Mammary epithelial cell (primary cell): ENCODE measurements at regions of chr12 and their contacts with region 1.

Region 1: DNA sequence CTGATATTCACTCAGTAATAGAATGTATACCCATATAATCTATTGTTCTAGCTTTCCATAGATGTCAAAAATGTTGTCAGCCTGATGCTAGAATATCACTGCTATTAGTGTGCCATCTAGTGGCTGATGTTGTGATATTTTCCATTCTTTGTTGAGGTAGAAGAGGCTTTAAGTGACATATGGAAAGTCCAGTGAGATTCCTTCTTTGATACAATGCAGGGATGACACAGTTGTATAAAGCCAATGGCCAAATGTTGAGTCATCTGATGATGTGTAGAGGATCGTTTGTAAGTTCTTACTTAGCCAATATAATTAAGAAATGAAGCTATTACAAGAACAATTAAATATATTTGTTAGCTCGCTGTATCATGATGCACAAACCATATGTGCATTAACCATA is 58.1 kb upstream of the PCED1B start:
- DNase-seq: peak; percentile 93
- H3K4me3 ChIP-seq: no peak overlapping the region
- H3K27ac ChIP-seq: peak overlapping the region; percentile 61
- H3K4me1 ChIP-seq: peaks cover 51% of the 10 kb centered on the region
- H3K27me3 ChIP-seq: no peaks in the 10 kb centered on the region
- CTCF ChIP-seq: peak; percentile 56 to 67

Region 2: GRCh38 chr12:45990468-45991283 is 1030.6 kb before region 1 on chr12 and contains the start of gene SCAF11:
- CTCF ChIA-PET with region 1: no interaction called
- dilution Hi-C with region 1: no loop called
- in situ Hi-C with region 1: no loop called
- intact Hi-C with region 1: loop called (anchors 1 kb)
- DNase-seq: peak; percentile 100
- H3K4me3 ChIP-seq: peak within 1 kb of the TSS; percentile 53 to 96 (median 67)
- H3K27ac ChIP-seq: peak within 1 kb of the TSS; percentile 83
- H3K4me1 ChIP-seq: peaks cover 23% of the 10 kb centered on the region
- H3K27me3 ChIP-seq: no peaks in the 10 kb centered on the region
- CTCF ChIP-seq: peak; percentile 92 to 95
- total RNA-seq, gene SCAF11: 99.2 to 100 TPM

Region 3: DNA sequence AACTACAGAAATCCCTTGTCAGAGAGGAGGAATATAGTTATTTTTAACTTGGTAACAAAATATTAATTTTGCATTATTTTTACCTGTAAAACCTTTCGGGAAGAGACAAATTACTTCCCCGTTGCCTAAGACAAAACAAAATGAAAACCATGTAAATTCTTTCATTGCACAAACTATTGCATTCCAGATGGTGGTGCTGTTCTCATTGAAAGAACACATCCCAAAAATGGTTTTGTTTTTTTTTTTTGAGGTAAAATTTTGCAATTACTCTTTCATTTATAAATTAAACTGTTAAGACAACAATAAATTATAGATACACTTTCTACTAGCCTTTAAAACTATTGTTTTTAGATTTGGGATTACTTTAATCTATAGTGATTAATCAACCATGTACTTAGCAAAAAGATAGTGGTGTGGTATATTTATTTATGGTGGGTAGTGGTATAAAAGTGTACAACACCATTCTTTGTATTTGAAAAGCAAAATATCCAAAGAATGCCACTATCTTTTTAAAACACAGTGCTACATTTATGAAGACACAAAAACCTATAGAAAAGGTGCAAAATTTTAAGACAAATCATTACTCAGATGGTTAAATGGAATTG is 867.9 kb before region 1 on chr12:
- CTCF ChIA-PET with region 1: no interaction called
- dilution Hi-C with region 1: no loop called
- in situ Hi-C with region 1: loop called in 1 of 2 experiments (anchors 25 kb)
- intact Hi-C with region 1: no loop called
- DNase-seq: no peak
- H3K4me3 ChIP-seq: peak overlapping the region in 1 of 3 experiments; percentile 17
- H3K27ac ChIP-seq: no peak overlapping the region
- H3K4me1 ChIP-seq: peaks cover 11% of the 10 kb centered on the region
- H3K27me3 ChIP-seq: no peaks in the 10 kb centered on the region
- CTCF ChIP-seq: peak; percentile 67 to 77

Region 4: DNA sequence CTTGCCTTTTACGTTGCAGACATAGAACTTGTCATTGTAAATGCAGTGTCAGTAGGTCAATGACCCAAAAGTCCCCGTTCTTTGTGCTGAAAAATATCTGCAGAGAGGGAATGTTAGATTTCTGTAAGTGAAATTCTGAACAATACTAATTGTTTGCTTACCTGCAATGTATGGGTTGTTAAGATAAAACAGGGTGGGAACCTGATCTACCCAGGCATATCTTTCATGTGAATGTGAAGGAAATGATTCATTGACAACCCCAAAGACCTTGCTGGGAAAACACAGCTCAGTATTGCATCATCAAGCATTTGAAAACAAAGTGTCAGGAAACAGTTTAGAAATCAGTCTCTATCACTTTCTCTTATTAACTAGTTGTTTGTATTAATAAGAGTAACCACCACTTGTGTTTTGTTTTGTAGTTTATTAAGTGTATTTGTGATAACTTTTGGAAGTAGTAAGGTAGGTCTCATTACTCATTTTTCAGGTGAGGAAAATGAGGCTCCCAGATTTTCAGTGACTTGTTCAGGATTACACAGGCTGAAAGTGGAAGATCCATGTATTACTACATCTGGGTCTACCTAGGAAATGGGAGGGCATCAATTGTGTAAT is 590.9 kb before region 1 on chr12:
- CTCF ChIA-PET with region 1: no interaction called
- dilution Hi-C with region 1: no loop called
- in situ Hi-C with region 1: no loop called
- intact Hi-C with region 1: loop called (anchors 2 kb)
- DNase-seq: peak; percentile 92
- H3K4me3 ChIP-seq: peak overlapping the region in 1 of 3 experiments; percentile 23
- H3K27ac ChIP-seq: peak overlapping the region; percentile 100
- H3K4me1 ChIP-seq: peaks cover 35% of the 10 kb centered on the region
- H3K27me3 ChIP-seq: no peaks in the 10 kb centered on the region
- CTCF ChIP-seq: no peak

Region 5: DNA sequence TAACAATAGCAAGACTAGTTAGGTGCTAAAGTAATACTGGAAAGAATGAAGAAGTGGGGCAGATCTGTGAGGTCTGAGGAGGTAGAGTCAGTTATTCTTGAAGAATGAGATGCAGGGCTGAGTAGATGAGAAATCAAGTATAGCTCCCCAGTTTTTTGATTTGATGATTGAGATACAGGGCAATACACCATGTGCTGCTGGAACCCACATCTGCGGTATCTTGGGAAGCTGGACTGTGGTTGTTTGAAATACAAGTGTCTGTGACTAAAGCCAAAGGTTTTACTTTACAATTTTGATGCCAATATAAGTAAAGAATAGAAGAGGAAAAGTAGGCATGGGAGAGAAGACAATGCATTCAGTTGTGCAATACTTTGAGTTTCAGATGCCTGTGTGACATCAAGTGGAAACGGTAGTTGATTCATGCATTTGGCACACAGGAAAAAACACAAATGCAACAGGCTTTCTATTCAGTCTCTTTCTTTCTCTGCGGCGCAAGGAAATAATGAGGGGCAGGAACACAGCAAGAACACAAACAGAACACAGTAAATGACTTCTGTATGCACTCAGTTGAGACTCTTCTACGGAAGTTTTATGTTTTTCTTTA is 458.6 kb before region 1 on chr12:
- CTCF ChIA-PET with region 1: no interaction called
- dilution Hi-C with region 1: no loop called
- in situ Hi-C with region 1: loop called in 1 of 2 experiments (anchors 25 kb)
- intact Hi-C with region 1: loop called (anchors 5 kb)
- DNase-seq: peak; percentile 95
- H3K4me3 ChIP-seq: no peak overlapping the region
- H3K27ac ChIP-seq: peak overlapping the region; percentile 96
- H3K4me1 ChIP-seq: peaks cover 41% of the 10 kb centered on the region
- H3K27me3 ChIP-seq: no peaks in the 10 kb centered on the region
- CTCF ChIP-seq: no peak

Region 6: DNA sequence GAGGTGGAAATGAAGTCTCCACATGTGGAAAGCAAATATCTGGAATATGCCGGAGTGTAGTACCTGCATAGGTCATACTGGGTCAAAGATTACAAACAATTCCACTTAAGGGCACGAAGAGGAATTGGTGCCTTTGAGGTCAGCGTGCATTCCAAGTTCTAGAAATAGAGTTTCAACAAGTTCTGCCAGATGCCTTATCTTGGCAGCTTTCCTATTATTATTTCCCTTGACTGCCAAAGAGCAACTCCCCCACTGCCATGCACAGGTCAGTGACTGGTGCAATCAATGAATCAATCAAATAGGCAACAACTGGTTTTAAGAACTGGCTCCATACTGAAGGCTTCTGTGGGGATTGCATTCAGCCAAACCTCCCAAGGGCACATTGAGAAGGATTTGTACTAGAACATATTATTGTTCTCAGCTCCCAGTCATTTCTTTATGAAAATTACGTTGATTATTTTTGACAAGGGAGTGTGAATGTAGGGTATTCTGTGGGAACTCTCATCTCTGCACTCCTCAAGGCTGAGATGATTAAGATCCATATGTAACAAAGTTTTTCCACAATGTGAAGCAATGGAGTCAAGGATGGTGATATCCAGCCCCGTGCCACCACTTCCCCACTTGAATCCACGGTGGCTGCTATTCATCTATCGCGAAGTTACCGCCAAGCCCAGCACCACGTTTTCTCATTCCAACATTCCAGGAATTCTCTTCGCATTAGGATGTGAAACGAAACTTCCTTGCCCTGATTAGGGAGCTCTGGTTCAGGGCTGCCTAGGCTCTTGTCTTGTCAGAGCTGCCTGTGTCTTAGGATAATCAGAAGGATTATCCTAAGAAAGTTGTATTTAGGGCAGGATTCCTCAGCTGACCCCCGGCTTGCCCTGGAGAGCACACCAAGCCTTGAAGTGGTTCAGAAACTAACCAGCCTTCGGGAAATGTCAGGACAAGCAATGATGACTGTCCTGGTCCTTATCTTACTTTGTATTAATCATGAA is 57.0 kb before region 1 on chr12:
- CTCF ChIA-PET with region 1: interaction called, 3 read pairs
- dilution Hi-C with region 1: no loop called
- in situ Hi-C with region 1: no loop called
- intact Hi-C with region 1: loop called (anchors 2 kb)
- DNase-seq: peak; percentile 81
- H3K4me3 ChIP-seq: peak overlapping the region in 1 of 3 experiments; percentile 13
- H3K27ac ChIP-seq: peak overlapping the region; percentile 90
- H3K4me1 ChIP-seq: peaks cover 31% of the 10 kb centered on the region
- H3K27me3 ChIP-seq: no peaks in the 10 kb centered on the region
- CTCF ChIP-seq: no peak

Region 7: GRCh38 chr12:46998811-46999368 is 22.4 kb before region 1 on chr12:
- CTCF ChIA-PET with region 1: no interaction called
- dilution Hi-C with region 1: no loop called
- in situ Hi-C with region 1: no loop called
- intact Hi-C with region 1: no loop called
- DNase-seq: peak; percentile 74
- H3K4me3 ChIP-seq: no peak overlapping the region
- H3K27ac ChIP-seq: peak overlapping the region; percentile 98
- H3K4me1 ChIP-seq: peaks cover 4% of the 10 kb centered on the region
- H3K27me3 ChIP-seq: no peaks in the 10 kb centered on the region
- CTCF ChIP-seq: no peak

Region 8: GRCh38 chr12:47686645-47687240 is 665.4 kb after region 1 on chr12:
- CTCF ChIA-PET with region 1: no interaction called
- dilution Hi-C with region 1: no loop called
- in situ Hi-C with region 1: loop called in 1 of 2 experiments (anchors 25 kb)
- intact Hi-C with region 1: loop called (anchors 2 kb)
- DNase-seq: peak; percentile 5
- H3K4me3 ChIP-seq: no peak overlapping the region
- H3K27ac ChIP-seq: no peak overlapping the region
- H3K4me1 ChIP-seq: no peaks in the 10 kb centered on the region
- H3K27me3 ChIP-seq: no peaks in the 10 kb centered on the region
- CTCF ChIP-seq: peak; percentile 54 to 79